HEK293 (cell line): ENCODE measurements at regions of chr19 and their contacts with region 1.

Region 1: GRCh38 chr19:1837625-1838105 is 10.6 kb downstream of the REXO1 start:
- H3K4me3 ChIP-seq: no peak overlapping the region
- H3K27ac ChIP-seq: no peak overlapping the region
- H3K4me1 ChIP-seq: no peaks in the 10 kb centered on the region
- CTCF ChIP-seq: peak; percentile 80

Region 2: DNA sequence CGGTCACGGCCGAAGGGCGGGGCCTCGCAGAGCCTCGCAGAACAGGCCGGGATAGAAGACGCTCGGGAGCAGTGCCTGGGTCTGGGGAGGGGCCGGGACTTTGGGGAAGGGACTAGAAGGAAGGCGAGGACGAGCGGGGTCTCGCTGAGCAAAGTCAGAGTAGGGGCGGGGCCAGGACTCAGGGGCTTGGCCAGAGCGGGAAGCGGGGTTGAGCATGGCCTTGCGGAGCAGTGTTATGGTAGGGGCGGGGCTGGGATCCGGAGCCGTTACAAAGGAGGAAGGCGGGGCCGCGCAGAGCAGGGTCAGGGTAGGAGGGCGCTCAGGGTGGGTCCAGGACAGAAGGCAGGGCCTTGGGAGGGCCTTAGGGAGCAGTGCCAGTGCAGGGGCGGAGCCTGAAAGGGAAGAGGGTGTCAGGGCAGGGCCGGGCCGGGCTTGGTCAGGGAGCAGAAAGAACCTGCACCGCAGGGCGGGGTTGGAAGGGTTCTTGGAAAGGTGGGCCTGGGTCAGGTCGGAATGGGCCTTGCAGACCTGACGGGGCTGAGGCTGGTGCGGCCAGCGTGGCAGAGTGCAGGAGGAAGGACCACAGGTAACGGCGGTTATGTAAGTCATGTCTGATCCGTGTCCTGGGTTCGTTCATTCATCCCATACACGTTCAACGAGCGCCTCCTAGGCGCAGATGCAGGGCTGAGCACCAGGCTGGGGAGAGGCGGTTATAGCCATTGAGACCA is 25.0 kb before region 1 on chr19:
- CTCF ChIA-PET with region 1: interaction called, 15 read pairs
- POLR2A ChIA-PET with region 1: no interaction called
- H3K4me3 ChIP-seq: peak overlapping the region; percentile 48
- H3K27ac ChIP-seq: peak overlapping the region; percentile 24; the same call in 1 of the 2 replicates
- H3K4me1 ChIP-seq: no peaks in the 10 kb centered on the region
- CTCF ChIP-seq: peak; percentile 91

Region 3: DNA sequence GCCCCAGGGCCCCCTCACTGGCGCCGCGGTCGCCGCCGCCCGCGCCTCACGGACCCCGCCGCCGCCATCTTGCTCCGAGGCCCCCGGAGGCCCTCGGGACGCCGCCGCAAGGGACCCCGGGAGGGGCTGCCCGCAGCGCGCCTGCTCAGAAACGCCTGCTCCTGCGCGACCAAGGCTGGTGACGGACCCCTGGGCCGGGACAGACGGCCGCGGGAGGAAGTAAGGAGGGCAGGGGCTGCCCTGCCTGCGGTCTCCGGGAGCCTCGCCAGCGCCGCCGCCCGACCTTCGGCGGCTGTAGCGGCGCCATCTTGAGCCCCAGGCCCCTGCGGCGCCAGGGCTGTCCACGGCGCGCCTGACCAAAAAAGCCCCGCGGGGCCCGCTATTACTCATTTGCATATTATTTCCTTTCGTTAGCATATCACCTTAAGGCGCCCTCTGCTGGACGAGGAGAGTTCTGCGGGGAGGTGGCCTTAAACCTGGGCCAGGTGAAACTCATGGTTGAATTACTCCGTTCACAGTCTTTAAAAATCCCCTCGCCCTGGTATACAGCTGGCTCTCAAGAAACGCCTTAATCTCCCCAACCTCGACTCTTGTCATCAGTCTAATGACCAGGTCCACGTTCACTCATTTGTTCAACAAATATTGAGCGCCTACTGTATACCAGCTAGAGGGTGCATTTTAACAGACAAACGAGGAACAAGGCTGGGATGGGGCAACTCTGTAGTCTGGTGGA is 10.9 kb after region 1 on chr19 and contains the start of gene REXO1:
- CTCF ChIA-PET with region 1: interaction called, 32 read pairs
- POLR2A ChIA-PET with region 1: interaction called, 5 read pairs
- H3K4me3 ChIP-seq: peak within 1 kb of the TSS; percentile 96
- H3K27ac ChIP-seq: peak within 1 kb of the TSS; percentile 100
- H3K4me1 ChIP-seq: peaks cover 2% of the 10 kb centered on the region; the same call in 1 of the 2 replicates
- CTCF ChIP-seq: peak; percentile 73

Region 4: GRCh38 chr19:1855040-1855827 is 17.6 kb after region 1 on chr19:
- CTCF ChIA-PET with region 1: interaction called, 13 read pairs
- POLR2A ChIA-PET with region 1: interaction called, 5 read pairs
- H3K4me3 ChIP-seq: no peak overlapping the region
- H3K27ac ChIP-seq: peak overlapping the region; percentile 46; the same call in 1 of the 2 replicates
- H3K4me1 ChIP-seq: peaks cover 15% of the 10 kb centered on the region
- CTCF ChIP-seq: no peak